Activated CD4-positive, alpha-beta memory T cell treated with anti-CD3 and anti-CD28 coated beads for 36 hours (primary cell): ENCODE measurements at regions of chr22 and their contacts with region 1.

Region 1: DNA sequence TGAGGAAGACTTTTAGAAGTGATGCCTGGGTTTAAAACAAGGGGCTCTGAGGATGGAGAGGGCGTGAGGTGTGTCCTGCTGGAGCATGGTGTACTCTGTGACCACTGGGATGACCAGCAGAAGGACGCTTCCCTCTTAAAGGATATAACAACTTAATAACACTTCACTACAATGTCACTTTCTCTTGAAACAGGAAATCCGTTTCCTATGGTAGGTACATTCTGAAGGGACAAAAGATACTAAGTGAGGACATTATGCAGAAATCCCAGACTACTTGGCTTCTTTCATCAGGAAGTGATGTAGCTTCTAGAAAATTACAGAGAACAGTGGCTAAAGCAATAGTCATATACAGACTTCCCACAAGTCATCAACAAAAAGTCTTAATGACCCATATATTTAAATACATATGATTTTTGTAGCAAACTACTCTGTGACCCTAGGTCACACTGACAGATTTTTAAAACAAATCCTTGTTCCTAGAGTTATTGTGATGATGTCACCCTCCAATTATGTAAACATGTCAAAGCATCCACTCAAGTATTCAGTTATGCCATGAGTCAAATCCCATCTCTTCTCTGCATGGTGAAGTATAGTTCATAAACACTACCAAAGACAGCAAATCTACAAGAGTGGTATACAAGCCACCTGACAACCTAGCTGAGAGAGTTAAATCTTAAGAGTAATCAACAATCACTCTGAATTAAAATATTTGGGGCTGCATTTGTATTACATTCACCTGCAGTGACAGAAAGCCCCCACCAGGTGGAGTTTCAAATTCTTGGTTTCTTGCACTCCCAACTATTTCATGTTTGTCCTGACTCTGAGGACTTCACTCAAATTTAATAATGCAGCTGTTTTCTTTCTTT is 32.8 kb downstream of the PITPNB start:
- DNase-seq: peak; percentile 48
- H3K4me3 Mint-ChIP-seq: no peak overlapping the region
- H3K27ac Mint-ChIP-seq: no peak overlapping the region
- H3K4me1 Mint-ChIP-seq: no peaks in the 10 kb centered on the region
- H3K27me3 Mint-ChIP-seq: no peaks in the 10 kb centered on the region

Region 2: GRCh38 chr22:27863001-27863400 is 23.2 kb before region 1 on chr22:
- CTCF ChIA-PET with region 1: interaction called, 12 read pairs
- POLR2A ChIA-PET with region 1: interaction called, 3 read pairs
- intact Hi-C with region 1: no loop called
- DNase-seq: no peak
- H3K4me3 Mint-ChIP-seq: no peak overlapping the region
- H3K27ac Mint-ChIP-seq: no peak overlapping the region
- H3K4me1 Mint-ChIP-seq: peaks cover 24% of the 10 kb centered on the region
- H3K27me3 Mint-ChIP-seq: no peaks in the 10 kb centered on the region

Region 3: GRCh38 chr22:27913162-27913741 is 27.0 kb after region 1 on chr22:
- CTCF ChIA-PET with region 1: interaction called, 38 read pairs
- POLR2A ChIA-PET with region 1: interaction called, 3 read pairs
- intact Hi-C with region 1: no loop called
- DNase-seq: no peak
- H3K4me3 Mint-ChIP-seq: no peak overlapping the region
- H3K27ac Mint-ChIP-seq: no peak overlapping the region
- H3K4me1 Mint-ChIP-seq: peaks cover 67% of the 10 kb centered on the region
- H3K27me3 Mint-ChIP-seq: no peaks in the 10 kb centered on the region

Region 4: DNA sequence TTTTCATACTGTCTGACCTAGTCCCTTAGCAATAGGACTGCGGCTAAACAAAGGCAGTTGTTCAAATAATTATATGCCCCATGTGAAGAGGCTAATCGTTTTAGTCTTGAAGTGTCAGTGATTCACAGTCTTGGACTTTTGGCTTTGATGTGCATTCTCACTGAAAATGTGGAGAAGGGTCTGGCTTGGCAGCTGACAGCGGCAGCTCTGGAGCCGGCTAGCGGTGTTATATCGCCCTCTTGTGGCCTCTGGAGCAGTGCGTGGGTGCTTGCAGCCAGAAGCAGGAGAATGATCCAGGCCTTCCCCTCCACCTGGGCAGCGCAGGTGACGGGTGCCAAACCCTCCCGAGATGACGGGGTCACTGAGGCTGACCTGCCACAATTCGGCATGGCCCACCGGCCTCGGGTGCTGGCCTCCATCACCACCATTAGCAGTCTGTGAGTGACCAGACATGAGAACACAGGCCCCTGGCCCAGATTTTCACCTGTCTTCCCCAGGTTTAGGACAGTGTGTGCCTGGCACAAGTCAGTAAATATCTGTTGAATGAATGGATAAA is 123.1 kb after region 1 on chr22:
- CTCF ChIA-PET with region 1: interaction called, 52 read pairs
- POLR2A ChIA-PET with region 1: no interaction called
- intact Hi-C with region 1: loop called (anchors 1 kb)
- DNase-seq: peak; percentile 84
- H3K4me3 Mint-ChIP-seq: no peak overlapping the region
- H3K27ac Mint-ChIP-seq: no peak overlapping the region
- H3K4me1 Mint-ChIP-seq: no peaks in the 10 kb centered on the region
- H3K27me3 Mint-ChIP-seq: no peaks in the 10 kb centered on the region